Transverse colon (tissue), 4 donors: ENCODE measurements at regions of chr3 and their contacts with region 1.

Region 1: DNA sequence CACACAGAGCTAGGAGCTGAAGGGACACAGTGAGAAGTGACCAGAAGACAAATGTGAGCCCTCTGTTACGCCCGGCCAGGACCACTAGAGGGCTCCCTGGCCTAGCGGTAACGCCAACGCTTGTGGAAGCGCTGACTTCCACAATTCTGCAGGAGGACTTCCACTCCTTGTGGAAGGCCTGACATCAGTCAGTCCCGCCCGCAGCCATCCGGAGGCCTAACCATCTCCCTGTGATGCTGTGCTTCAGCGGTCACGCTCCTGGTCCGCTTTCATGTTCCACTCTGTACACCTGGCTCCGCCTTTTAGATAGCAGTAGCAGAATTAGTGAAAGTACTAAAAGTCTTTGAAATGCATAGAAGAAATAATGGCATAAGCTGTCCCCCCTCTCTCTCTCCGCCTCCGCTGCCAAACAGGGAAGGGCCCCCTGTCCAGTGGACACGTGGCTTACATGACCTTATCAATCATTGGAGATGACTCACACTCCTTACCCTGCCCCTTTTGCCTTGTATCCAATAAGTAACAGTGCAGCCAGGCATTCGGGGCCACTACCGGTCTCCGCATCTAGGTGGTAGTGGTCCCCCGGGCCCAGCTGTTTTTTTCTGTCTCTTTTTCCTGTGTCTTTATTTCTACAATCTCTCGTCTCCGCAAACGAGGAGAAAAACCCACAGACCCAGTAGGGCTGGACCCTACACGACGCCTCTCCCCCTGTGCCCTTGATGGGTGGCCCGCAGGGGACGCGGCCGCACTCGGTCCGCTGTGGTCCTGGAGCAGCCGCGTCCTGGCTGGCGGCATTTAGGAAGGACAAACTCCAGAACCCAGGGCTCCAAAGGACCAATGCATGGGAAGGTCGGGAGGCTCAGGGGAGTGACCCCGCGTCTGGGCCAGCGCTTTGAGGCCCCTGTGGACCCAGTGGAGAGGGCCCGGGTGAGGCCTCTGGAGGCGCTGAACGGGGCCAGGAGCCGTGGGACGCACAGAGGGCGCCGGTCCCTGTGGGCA is 27.0 kb upstream of the RPL32 start:
- DNase-seq: peak; percentile 82
- H3K4me3 ChIP-seq: peak overlapping the region in 2 of 4 donors; percentile 11 to 35
- H3K27ac ChIP-seq: no peak overlapping the region
- H3K4me1 ChIP-seq: peaks cover 3 to 14% (median 11%) of the 10 kb centered on the region in 4 donors
- H3K27me3 ChIP-seq: peaks cover 9% of the 10 kb centered on the region
- CTCF ChIP-seq: peak; percentile 85 to 90 (median 89)
- EP300 ChIP-seq: no peak
- POLR2A ChIP-seq: no peak

Region 2: DNA sequence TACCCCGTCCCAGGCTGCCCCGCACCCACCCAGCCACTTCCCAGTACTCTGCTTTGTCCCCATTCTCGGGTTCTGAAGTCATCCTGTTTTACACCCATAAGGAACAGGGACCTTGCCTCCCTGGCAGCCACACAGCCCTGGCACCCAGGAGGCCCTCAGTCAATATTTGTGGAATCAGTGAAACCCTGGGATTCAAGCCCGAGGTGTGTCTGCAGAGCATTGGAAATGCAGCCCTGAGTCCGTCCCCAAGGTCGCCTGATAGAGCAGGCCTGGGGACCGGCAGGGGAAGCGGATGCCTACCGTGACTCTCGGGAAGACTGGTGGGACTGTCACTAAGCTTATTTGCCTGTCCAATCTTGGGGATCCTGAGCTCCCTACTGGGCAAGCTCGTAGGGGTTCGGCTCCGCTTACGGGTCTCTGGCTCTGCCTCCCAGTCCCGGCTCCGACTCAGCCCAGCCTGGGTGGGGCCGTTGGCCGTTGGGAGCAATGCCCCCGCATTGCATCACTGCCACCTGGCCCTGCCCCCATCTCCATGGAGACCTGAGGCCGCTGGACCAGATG is 957.3 kb before region 1 on chr3:
- in situ Hi-C with region 1: loop called in 1 of 4 experiments (anchors 5 kb)
- intact Hi-C with region 1: no loop called
- DNase-seq: no peak
- H3K4me3 ChIP-seq: no peak overlapping the region
- H3K27ac ChIP-seq: no peak overlapping the region
- H3K4me1 ChIP-seq: no peaks in the 10 kb centered on the region
- H3K27me3 ChIP-seq: no peaks in the 10 kb centered on the region
- CTCF ChIP-seq: no peak
- EP300 ChIP-seq: no peak
- POLR2A ChIP-seq: no peak

Region 3: GRCh38 chr3:12891985-12892839 is 23.9 kb after region 1 on chr3:
- in situ Hi-C with region 1: no loop called
- intact Hi-C with region 1: loop called (anchors 1 kb)
- DNase-seq: peak; percentile 35
- H3K4me3 ChIP-seq: peak overlapping the region in 1 of 4 donors; percentile 32
- H3K27ac ChIP-seq: no peak overlapping the region
- H3K4me1 ChIP-seq: peaks cover 0 to 9% (median 3%) of the 10 kb centered on the region in 4 donors
- H3K27me3 ChIP-seq: peaks cover 12% of the 10 kb centered on the region
- CTCF ChIP-seq: peak; percentile 86 to 92 (median 90)
- EP300 ChIP-seq: no peak
- POLR2A ChIP-seq: no peak

Region 4: DNA sequence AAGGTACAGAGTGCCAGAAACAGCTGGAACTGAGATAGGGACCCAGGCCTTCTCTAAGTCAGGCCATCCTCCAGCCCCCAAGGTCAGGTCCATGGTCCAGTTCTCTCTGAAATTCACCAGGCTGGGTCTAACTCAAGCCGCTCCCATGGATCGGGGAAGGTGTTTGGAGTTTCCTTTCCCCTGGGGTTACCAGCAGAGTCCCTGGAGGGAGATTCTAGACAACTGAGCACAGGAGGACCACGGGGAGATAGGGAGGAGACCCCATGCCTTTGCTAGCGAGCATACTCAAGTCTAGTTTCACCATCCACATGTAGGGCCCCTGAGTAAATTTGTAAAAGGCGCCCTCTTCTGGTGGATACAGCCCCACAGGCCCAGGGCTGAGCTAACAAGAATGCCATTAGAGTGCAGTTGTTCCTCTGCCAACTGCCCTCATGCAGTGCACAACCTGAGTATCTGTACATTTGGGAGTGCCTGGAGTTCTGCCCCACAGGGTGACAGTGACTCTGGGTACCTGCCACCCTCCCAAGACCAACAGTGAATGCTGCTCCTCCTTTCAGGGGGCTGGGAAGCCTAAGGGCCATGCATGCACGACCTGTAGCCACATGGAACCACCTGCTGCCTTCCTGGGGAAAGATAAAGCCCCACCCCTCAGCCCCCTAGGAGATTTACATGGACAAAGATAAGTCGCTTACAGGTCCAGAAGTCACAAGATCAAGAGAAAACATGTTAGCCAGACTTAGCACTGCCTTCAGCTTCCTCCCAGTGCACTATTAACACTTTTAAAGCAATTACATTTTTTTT is 115.9 kb after region 1 on chr3:
- in situ Hi-C with region 1: no loop called
- intact Hi-C with region 1: loop called (anchors 10 kb)
- DNase-seq: peak; percentile 78
- H3K4me3 ChIP-seq: no peak overlapping the region
- H3K27ac ChIP-seq: no peak overlapping the region
- H3K4me1 ChIP-seq: no peaks in the 10 kb centered on the region
- H3K27me3 ChIP-seq: no peaks in the 10 kb centered on the region
- CTCF ChIP-seq: peak; percentile 57 to 73 (median 68)
- EP300 ChIP-seq: no peak
- POLR2A ChIP-seq: no peak